ENCODE measurements at regions of chr5 and their contacts with region 1.

Region 1: GRCh38 chr5:150022163-150022540 is 21.6 kb downstream of the HMGXB3 start:
- DNase-seq: peak; percentile 98
- H3K4me3 Mint-ChIP-seq: peak overlapping the region; percentile 63
- H3K27ac Mint-ChIP-seq: peak overlapping the region; percentile 89
- H3K4me1 Mint-ChIP-seq: peaks cover 48% of the 10 kb centered on the region
- H3K27me3 Mint-ChIP-seq: no peaks in the 10 kb centered on the region
- CTCF ChIP-seq: no peak

Region 2: GRCh38 chr5:150009671-150010387 is 12.3 kb before region 1 on chr5:
- CTCF ChIA-PET with region 1: interaction called, 10 read pairs
- POLR2A ChIA-PET with region 1: interaction called, 32 read pairs
- intact Hi-C with region 1: no loop called
- DNase-seq: no peak
- H3K4me3 Mint-ChIP-seq: no peak overlapping the region
- H3K27ac Mint-ChIP-seq: peak overlapping the region; percentile 25
- H3K4me1 Mint-ChIP-seq: no peaks in the 10 kb centered on the region
- H3K27me3 Mint-ChIP-seq: no peaks in the 10 kb centered on the region
- CTCF ChIP-seq: no peak

Region 3: GRCh38 chr5:150112261-150113046 is 90.3 kb after region 1 on chr5:
- CTCF ChIA-PET with region 1: no interaction called
- POLR2A ChIA-PET with region 1: interaction called, 16 read pairs
- intact Hi-C with region 1: no loop called
- DNase-seq: peak; percentile 93
- H3K4me3 Mint-ChIP-seq: no peak overlapping the region
- H3K27ac Mint-ChIP-seq: peak overlapping the region; percentile 46
- H3K4me1 Mint-ChIP-seq: peaks cover 47% of the 10 kb centered on the region
- H3K27me3 Mint-ChIP-seq: no peaks in the 10 kb centered on the region
- CTCF ChIP-seq: no peak

Measured in MCF 10A (cell line).